Stomach (tissue), 19 donors: ENCODE measurements at regions of chr4 and their contacts with region 1.

Region 1: DNA sequence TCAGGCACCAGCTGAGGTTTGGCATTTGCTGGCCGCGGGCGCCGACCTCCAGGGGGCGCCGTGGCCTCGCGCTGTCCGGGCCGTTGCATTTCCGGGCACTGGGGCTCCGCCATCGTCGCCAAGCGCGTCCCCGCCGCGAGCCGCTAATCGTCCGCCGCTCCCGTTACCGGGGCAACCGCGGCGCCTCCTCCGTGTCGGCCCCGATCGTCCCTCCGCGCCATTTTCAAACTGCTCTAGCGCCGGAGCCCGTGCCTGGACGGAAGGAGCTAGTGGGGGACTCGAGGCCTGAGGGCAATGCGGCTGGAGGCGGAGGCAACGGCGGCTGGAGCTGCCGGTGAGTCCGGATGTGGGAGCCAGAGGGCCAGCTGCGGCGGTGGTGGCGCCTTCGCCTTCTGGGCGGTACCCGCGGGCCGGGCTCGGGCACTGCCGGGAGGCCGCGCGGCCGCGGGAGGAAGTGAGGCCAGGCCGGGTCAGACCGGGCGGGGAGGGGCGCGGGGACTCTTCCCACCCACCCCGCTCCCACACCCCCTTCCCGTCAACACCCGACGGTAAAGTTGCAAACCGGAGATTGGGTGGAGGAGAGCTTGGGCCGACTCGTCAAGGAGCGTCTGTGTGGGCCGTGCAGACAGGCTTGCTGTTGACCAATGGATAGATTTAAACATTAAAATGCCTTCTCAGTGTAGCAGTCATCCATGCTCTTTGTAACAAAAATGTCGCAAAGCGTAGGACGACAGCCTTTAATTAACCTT is at the start of gene CEP135:
- DNase-seq: peak; percentile 94 to 99
- H3K4me3 ChIP-seq: peak within 1 kb of the TSS; percentile 72 to 85 (median 79)
- H3K27ac ChIP-seq: peak within 1 kb of the TSS; percentile 90 to 96 (median 92)
- H3K4me1 ChIP-seq: peaks cover 11 to 30% (median 22%) of the 10 kb centered on the region in 4 donors
- H3K27me3 ChIP-seq: no peaks in the 10 kb centered on the region
- CTCF ChIP-seq: peak in 5 of 7 experiments; percentile 83 to 93 (median 90)
- EP300 ChIP-seq: no peak
- POLR2A ChIP-seq: no peak
- total RNA-seq, gene CEP135: 3.6 to 18.1 (median 11.7) TPM

Region 2: DNA sequence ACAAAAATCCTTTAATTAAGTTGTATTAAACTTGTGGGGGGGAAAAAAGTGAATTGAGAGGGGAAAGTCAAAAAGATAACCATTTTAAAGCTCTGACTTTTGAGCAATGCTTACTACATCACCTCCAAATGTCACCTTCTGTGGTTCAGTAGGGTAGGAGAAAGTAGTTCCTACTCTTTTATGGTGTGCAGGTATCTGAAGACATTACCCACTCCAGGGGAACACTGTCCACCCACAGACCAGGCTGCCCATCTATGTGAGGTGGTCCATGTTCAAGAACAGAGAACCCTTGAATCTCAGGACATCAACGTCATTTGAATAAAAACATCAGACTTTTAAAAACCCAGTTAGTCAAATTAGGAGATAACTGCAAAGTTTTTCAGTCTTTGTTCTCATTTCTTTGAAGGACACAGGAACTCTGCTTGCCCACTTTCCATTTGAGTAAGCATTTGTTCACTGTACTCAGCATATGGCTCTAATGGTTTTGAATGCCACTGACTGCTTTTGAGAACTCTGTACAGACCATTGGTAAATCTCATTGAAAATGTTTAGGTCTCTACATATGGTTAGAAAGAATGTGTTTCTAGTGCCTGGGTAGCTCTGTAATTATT is 331.2 kb before region 1 on chr4:
- intact Hi-C with region 1: no loop called
- DNase-seq: no peak
- H3K4me3 ChIP-seq: no peak overlapping the region
- H3K27ac ChIP-seq: no peak overlapping the region
- H3K4me1 ChIP-seq: no peaks in the 10 kb centered on the region
- H3K27me3 ChIP-seq: no peaks in the 10 kb centered on the region
- CTCF ChIP-seq: no peak
- EP300 ChIP-seq: no peak
- POLR2A ChIP-seq: no peak

Region 3: DNA sequence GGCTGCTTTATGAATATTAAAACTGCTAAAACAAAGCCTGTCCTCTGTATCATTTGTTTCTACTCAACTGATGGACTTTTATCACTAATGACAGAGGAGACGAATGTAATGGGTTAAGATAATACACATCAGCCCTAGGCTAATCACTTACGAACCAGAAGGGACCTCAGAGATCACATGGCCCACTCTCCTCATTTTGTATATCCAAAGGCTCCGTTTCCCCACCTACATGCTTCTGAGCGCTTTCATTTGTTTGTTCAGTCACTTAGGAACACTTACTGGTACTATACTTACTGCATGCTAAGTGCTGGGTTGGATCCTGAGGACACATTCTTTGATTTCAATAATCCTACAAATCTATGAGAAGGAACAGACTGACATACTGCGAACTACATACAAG is 169.2 kb after region 1 on chr4:
- intact Hi-C with region 1: no loop called
- DNase-seq: no peak
- H3K4me3 ChIP-seq: no peak overlapping the region
- H3K27ac ChIP-seq: no peak overlapping the region
- H3K4me1 ChIP-seq: no peaks in the 10 kb centered on the region
- H3K27me3 ChIP-seq: no peaks in the 10 kb centered on the region
- CTCF ChIP-seq: no peak
- EP300 ChIP-seq: no peak
- POLR2A ChIP-seq: no peak

Region 4: GRCh38 chr4:56301181-56302076 is 352.5 kb after region 1 on chr4:
- intact Hi-C with region 1: loop called (anchors 10 kb)
- DNase-seq: peak; percentile 74 to 93
- H3K4me3 ChIP-seq: no peak overlapping the region
- H3K27ac ChIP-seq: no peak overlapping the region
- H3K4me1 ChIP-seq: peaks cover 0 to 15% (median 5%) of the 10 kb centered on the region in 4 donors
- H3K27me3 ChIP-seq: no peaks in the 10 kb centered on the region
- CTCF ChIP-seq: peak in 5 of 7 experiments; percentile 70 to 81 (median 73)
- EP300 ChIP-seq: no peak
- POLR2A ChIP-seq: no peak

Region 5: GRCh38 chr4:56613101-56613862 is 664.4 kb after region 1 on chr4:
- intact Hi-C with region 1: no loop called
- DNase-seq: no peak
- H3K4me3 ChIP-seq: no peak overlapping the region
- H3K27ac ChIP-seq: no peak overlapping the region
- H3K4me1 ChIP-seq: no peaks in the 10 kb centered on the region
- H3K27me3 ChIP-seq: peaks cover 0 to 3% (median 0%) of the 10 kb centered on the region in 3 donors
- CTCF ChIP-seq: no peak
- EP300 ChIP-seq: no peak
- POLR2A ChIP-seq: no peak

Region 6: GRCh38 chr4:56668298-56668697 is 719.4 kb after region 1 on chr4:
- intact Hi-C with region 1: no loop called
- DNase-seq: no peak
- H3K4me3 ChIP-seq: no peak overlapping the region
- H3K27ac ChIP-seq: no peak overlapping the region
- H3K4me1 ChIP-seq: no peaks in the 10 kb centered on the region
- H3K27me3 ChIP-seq: no peaks in the 10 kb centered on the region
- CTCF ChIP-seq: peak in 2 of 7 experiments; percentile 14 to 22
- EP300 ChIP-seq: no peak
- POLR2A ChIP-seq: no peak